H1 (cell line): ENCODE measurements at regions of chr10 and their contacts with region 1.

Region 1: DNA sequence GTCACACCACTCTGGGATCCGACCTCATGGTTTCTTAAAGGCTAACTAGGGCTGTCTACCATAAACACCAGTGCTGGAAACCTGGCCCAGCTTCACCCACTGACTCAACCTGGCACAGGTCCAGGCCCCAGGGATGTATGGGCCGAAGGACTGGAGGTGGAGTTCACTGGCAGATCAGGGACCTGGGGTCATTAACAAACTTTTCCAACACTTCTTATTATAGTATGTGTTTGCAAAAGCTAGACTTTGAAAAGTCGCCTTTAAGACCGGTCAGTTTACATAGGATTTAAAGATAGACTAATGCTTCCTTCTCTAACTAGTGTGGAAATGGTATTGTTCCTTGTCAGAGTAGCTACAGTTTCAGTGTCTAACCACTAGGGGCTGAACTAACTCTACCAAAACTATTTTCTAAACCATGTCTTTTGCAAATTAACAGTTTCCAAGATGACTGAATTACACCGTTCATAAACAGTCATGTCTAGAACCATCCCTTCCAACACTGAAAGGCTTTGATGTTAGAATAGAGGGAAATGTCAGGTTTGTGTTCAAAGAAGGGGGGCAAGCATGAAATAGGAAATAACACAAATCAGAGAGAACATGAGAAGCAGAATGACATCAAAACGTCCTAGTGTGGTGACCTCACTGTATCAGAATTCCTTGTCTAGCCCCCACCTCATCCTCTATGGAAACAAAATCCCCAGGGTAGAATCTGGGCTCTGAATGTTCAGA is 29.7 kb downstream of the STN1 start:
- DNase-seq: no peak
- H3K4me3 ChIP-seq: no peak overlapping the region
- H3K27ac ChIP-seq: no peak overlapping the region
- H3K4me1 ChIP-seq: peaks cover 0 to 2% (median 0%) of the 10 kb centered on the region in 4 experiments; a peak in 1 of 7 replicates
- H3K27me3 ChIP-seq: no peaks in the 10 kb centered on the region
- CTCF ChIP-seq: peak in 2 of 3 experiments; percentile 49 to 85; a peak in 2 of 4 replicates
- EP300 ChIP-seq: no peak
- POLR2A ChIP-seq: no peak
- RAD21 ChIP-seq: peak; percentile 88 to 89

Region 2: DNA sequence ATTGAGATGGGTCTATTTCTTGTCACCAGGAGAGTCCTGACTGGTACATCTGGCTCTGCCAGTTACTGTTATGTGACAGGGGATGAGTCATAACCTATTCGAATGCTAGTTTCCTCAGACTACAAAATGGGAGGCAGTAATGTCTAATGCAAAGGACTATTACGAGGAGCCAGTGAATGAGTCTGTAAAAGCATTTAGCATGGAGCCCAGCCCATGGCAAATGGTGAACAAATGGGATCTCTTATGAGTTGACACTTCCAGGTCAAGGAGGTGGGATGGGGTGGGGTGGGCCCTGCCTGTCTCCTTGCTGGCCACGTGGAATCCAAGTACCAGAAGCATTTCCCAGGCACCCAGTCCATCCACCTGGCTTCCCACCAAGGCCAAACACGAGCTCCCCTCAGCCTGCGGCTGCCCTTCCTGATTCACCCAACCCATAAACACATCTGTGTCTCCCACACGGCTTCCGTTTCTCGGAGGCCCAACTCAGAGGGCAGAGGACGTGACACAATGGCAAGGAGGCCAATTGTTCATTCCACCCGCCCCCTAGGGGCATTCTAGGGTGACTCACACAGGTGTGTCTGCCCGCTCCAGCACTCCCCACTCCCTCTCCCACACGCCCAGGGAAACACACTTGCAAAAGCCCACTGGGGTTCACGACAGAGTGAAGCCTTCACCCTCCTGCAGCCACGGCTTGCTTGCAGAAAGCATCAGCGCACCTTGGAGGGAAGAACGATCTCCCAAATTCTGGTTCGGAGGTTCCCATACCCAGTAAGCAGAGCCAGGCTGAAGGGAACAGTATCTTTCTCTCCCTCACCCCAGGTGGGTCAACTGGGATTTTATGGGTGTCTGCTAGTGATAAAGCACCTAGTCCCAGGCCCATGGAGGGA is 142.7 kb before region 1 on chr10:
- CTCF ChIA-PET with region 1: interaction called, 12 read pairs
- POLR2A ChIA-PET with region 1: no interaction called
- DNase-seq: no peak
- H3K4me3 ChIP-seq: no peak overlapping the region
- H3K27ac ChIP-seq: no peak overlapping the region; the same call in 1 of the 2 replicates
- H3K4me1 ChIP-seq: no peaks in the 10 kb centered on the region; a peak in 2 of 7 replicates
- H3K27me3 ChIP-seq: no peaks in the 10 kb centered on the region; a peak in 1 of 7 replicates
- CTCF ChIP-seq: peak; percentile 15 to 29 (median 16); a peak in 3 of 4 replicates
- EP300 ChIP-seq: no peak
- POLR2A ChIP-seq: no peak
- RAD21 ChIP-seq: peak in 1 of 2 experiments; percentile 28; a peak in 3 of 4 replicates

Region 3: GRCh38 chr10:103781329-103782061 is 106.8 kb before region 1 on chr10:
- CTCF ChIA-PET with region 1: no interaction called
- POLR2A ChIA-PET with region 1: no interaction called
- DNase-seq: no peak
- H3K4me3 ChIP-seq: no peak overlapping the region
- H3K27ac ChIP-seq: no peak overlapping the region
- H3K4me1 ChIP-seq: peaks cover 0 to 2% (median 0%) of the 10 kb centered on the region in 4 experiments; a peak in 1 of 7 replicates
- H3K27me3 ChIP-seq: no peaks in the 10 kb centered on the region
- CTCF ChIP-seq: peak; percentile 22 to 78 (median 56)
- EP300 ChIP-seq: no peak
- POLR2A ChIP-seq: no peak
- RAD21 ChIP-seq: peak; percentile 34 to 51; a peak in 3 of 4 replicates

Region 4: DNA sequence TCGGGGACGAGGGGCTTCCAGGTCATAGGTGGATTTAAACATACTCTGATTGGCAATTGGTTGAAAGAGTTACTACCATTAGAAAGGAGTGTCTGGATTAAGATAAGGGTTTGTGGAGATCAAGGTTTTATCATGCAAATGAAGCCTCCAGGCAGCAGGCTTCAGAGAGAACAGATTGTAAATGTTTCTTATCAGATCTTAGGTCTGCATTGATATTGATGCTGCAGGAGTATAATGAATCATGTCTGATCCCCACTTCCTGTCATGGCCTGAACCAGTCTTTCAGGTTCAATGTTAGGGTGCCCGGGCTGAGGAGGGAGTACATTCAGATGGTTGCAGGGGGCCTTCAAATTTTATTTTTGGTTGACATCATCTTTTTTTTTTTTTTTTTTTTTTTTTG is 84.3 kb before region 1 on chr10:
- CTCF ChIA-PET with region 1: no interaction called
- POLR2A ChIA-PET with region 1: no interaction called
- DNase-seq: no peak
- H3K4me3 ChIP-seq: no peak overlapping the region
- H3K27ac ChIP-seq: no peak overlapping the region
- H3K4me1 ChIP-seq: peaks cover 0 to 14% (median 7%) of the 10 kb centered on the region in 4 experiments; a peak in 4 of 7 replicates
- H3K27me3 ChIP-seq: no peaks in the 10 kb centered on the region
- CTCF ChIP-seq: no peak
- EP300 ChIP-seq: no peak
- POLR2A ChIP-seq: no peak
- RAD21 ChIP-seq: no peak

Region 5: GRCh38 chr10:103870516-103870915 is 17.8 kb before region 1 on chr10:
- CTCF ChIA-PET with region 1: interaction called, 41 read pairs
- POLR2A ChIA-PET with region 1: interaction called, 3 read pairs
- DNase-seq: no peak
- H3K4me3 ChIP-seq: no peak overlapping the region
- H3K27ac ChIP-seq: no peak overlapping the region
- H3K4me1 ChIP-seq: peaks cover 0 to 8% (median 1%) of the 10 kb centered on the region in 4 experiments; a peak in 1 of 7 replicates
- H3K27me3 ChIP-seq: no peaks in the 10 kb centered on the region
- CTCF ChIP-seq: no peak
- EP300 ChIP-seq: no peak
- POLR2A ChIP-seq: no peak
- RAD21 ChIP-seq: no peak

Region 6: GRCh38 chr10:103877861-103878260 is 10.4 kb before region 1 on chr10:
- CTCF ChIA-PET with region 1: interaction called, 41 read pairs
- POLR2A ChIA-PET with region 1: no interaction called
- DNase-seq: no peak
- H3K4me3 ChIP-seq: no peak overlapping the region
- H3K27ac ChIP-seq: no peak overlapping the region
- H3K4me1 ChIP-seq: no peaks in the 10 kb centered on the region
- H3K27me3 ChIP-seq: no peaks in the 10 kb centered on the region
- CTCF ChIP-seq: no peak
- EP300 ChIP-seq: no peak
- POLR2A ChIP-seq: no peak
- RAD21 ChIP-seq: no peak